ENCODE measurements at regions of chr17 and their contacts with region 1.

Region 1: DNA sequence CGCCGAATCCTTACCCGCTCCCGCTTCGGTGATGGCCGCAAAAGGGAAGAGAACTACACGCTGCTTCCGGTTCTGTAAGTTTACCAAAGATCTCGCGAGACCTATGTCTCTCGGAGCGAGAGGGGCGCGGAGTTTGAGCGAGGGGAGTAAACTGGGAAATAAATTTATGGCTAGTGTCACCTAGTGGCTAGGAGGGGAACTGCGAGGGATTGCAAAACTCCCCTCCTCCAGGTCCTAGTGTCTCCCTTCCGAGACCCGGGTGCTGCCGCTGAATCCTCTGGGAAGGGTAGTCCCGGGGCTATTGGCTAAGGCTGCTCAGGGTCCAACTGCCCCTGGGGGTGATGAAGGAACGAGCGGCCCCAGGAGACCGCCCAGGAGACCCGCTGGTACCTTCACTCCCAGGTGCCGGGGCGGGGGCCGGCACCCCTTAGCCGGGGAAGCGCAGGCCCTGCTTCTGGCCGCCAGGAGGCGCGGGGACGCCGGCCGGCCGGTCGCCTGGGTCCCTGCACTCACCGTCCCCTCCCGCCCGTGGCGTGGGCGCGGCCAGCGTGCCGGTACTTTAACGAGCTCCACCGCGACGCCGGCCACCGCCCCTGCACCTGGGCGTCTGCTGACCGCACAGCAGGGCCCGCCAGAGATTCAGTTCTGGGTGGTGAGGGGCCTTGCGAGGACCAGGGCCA is at the start of gene RPL26:
- DNase-seq: peak; percentile 96 to 97
- H3K4me3 ChIP-seq: peak within 1 kb of the TSS; percentile 91 to 100 (median 98)
- H3K27ac ChIP-seq: peak within 1 kb of the TSS; percentile 76
- H3K4me1 ChIP-seq: peaks cover 0 to 12% (median 4%) of the 10 kb centered on the region in 4 experiments; a peak in 5 of 7 replicates
- H3K27me3 ChIP-seq: no peaks in the 10 kb centered on the region
- CTCF ChIP-seq: peak; percentile 75 to 84 (median 83)
- EP300 ChIP-seq: no peak
- POLR2A ChIP-seq: peak; percentile 99
- RAD21 ChIP-seq: peak; percentile 16 to 35; a peak in 3 of 4 replicates
- total RNA-seq, gene RPL26: 1,963 and 1,980 TPM in 2 replicates

Region 2: GRCh38 chr17:8314797-8315763 is 68.2 kb before region 1 on chr17:
- CTCF ChIA-PET with region 1: interaction called, 3 read pairs
- POLR2A ChIA-PET with region 1: interaction called, 19 read pairs
- DNase-seq: no peak
- H3K4me3 ChIP-seq: peak overlapping the region; percentile 46 to 79 (median 66)
- H3K27ac ChIP-seq: no peak overlapping the region
- H3K4me1 ChIP-seq: peaks cover 0 to 16% (median 6%) of the 10 kb centered on the region in 4 experiments; a peak in 5 of 7 replicates
- H3K27me3 ChIP-seq: peaks cover 3 to 28% (median 23%) of the 10 kb centered on the region in 4 experiments
- CTCF ChIP-seq: no peak
- EP300 ChIP-seq: no peak
- POLR2A ChIP-seq: no peak
- RAD21 ChIP-seq: no peak

Region 3: DNA sequence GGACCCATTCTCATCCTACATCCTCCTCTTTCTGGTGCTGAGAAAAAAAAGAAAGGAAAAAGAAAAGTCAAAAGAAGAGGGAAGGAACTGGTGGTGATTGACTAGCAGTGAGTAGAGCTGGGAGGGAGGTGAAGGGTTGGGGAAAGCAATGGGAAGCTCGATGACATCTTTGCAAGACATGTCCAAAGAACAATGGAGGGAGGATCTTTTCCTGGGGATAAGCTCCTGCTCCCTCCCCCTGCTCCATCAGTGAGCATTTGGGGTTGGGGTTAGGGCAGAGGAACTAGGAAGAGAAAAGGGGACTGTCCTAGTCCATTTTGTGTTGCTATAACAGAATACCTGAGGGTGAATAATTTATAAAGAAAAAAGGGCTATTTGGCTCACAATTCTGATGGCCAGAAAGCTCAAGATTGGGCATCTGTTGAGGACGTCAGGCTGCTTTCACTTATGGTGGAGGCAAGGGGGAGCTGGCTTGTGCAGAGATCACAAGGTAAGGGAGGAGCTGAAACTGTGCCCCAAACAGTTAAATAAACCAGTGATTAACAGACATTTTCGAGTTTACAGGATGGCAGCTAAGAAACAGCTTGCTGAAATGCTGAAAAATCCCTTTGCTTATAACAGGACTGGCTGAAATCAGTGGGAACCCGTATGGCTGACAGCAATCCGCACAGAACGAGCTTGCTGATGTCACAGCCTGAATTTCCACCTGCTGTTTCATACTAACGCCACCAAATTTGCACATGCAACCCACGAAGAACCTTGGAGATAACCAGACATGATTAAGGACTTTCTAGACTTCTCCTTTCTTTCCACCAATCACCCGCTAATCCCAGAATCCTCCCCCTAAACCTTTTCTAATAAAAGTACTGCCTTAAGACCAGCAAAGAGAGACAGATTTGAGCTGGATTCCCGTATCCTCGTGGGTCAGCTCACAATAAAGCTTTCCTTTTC is 45.2 kb before region 1 on chr17:
- CTCF ChIA-PET with region 1: interaction called, 3 read pairs
- POLR2A ChIA-PET with region 1: interaction called, 66 read pairs
- DNase-seq: no peak
- H3K4me3 ChIP-seq: no peak overlapping the region
- H3K27ac ChIP-seq: no peak overlapping the region
- H3K4me1 ChIP-seq: peaks cover 2 to 10% (median 5%) of the 10 kb centered on the region in 4 experiments; a peak in 6 of 7 replicates
- H3K27me3 ChIP-seq: no peaks in the 10 kb centered on the region
- CTCF ChIP-seq: no peak
- EP300 ChIP-seq: no peak
- POLR2A ChIP-seq: no peak
- RAD21 ChIP-seq: no peak

Region 4: GRCh38 chr17:8359769-8360168 is 23.5 kb before region 1 on chr17:
- CTCF ChIA-PET with region 1: interaction called, 3 read pairs
- POLR2A ChIA-PET with region 1: interaction called, 36 read pairs
- DNase-seq: no peak
- H3K4me3 ChIP-seq: no peak overlapping the region
- H3K27ac ChIP-seq: no peak overlapping the region
- H3K4me1 ChIP-seq: peaks cover 0 to 5% (median 1%) of the 10 kb centered on the region in 4 experiments; a peak in 1 of 7 replicates
- H3K27me3 ChIP-seq: no peaks in the 10 kb centered on the region
- CTCF ChIP-seq: no peak
- EP300 ChIP-seq: no peak
- POLR2A ChIP-seq: no peak
- RAD21 ChIP-seq: no peak

Region 5: GRCh38 chr17:8393420-8394241 is 10.3 kb after region 1 on chr17:
- CTCF ChIA-PET with region 1: interaction called, 16 read pairs
- POLR2A ChIA-PET with region 1: interaction called, 51 read pairs
- DNase-seq: no peak
- H3K4me3 ChIP-seq: no peak overlapping the region
- H3K27ac ChIP-seq: no peak overlapping the region
- H3K4me1 ChIP-seq: peaks cover 4 to 12% (median 4%) of the 10 kb centered on the region in 4 experiments; a peak in 6 of 7 replicates
- H3K27me3 ChIP-seq: no peaks in the 10 kb centered on the region
- CTCF ChIP-seq: no peak
- EP300 ChIP-seq: no peak
- POLR2A ChIP-seq: no peak
- RAD21 ChIP-seq: no peak

Region 6: DNA sequence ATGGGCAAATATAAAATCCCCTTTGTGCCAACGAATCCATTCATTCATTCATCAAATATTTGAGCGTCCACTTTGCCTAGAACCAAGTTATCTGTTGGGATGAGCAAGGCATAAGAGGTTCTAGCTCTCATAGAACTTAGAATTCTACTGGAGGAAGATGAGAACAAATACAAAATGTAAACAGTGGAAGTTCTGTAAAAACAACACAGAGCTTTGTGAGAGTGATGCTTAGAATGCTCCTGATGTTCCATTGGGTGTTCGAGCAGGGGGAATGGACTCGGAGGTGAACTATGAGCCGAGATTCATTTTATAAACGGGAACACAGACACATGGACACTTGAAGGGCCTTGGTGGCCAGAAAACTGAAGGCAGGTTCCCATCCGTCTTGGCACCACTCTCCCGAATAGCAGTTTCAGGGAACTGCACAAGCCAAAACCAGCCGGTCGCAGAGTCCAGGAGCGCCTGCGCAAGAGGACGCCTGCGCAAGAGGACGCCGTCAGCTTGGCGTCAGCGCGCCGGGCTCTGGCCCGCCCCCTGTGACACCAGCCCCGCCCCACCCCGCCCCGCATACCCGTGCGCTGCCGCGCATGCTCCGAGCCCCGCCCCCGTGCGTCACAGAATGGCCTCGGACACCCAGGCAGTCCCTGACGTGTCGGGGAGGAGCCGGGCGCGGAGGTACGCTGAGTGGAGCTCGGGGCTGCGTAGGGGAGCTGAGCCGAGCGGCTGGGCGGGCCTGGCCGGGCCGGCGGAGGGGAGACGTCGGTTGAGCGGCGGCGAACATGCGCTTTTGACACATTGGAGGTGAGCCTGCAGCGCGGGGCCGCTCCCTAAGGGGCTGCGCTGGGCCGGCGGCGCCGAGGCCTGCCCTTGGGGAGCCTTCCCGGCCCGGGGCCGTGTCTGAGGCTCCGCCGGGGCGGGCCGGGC is 52.2 kb after region 1 on chr17 and contains the start of gene NDEL1:
- CTCF ChIA-PET with region 1: interaction called, 5 read pairs
- POLR2A ChIA-PET with region 1: interaction called, 10 read pairs
- DNase-seq: peak; percentile 91 to 98
- H3K4me3 ChIP-seq: peak within 1 kb of the TSS; percentile 84 to 95 (median 91)
- H3K27ac ChIP-seq: peak within 1 kb of the TSS; percentile 64
- H3K4me1 ChIP-seq: peaks cover 0 to 2% (median under 1%) of the 10 kb centered on the region in 4 experiments; a peak in 2 of 7 replicates
- H3K27me3 ChIP-seq: no peaks in the 10 kb centered on the region
- CTCF ChIP-seq: no peak
- EP300 ChIP-seq: no peak
- POLR2A ChIP-seq: peak; percentile 87
- RAD21 ChIP-seq: no peak
- total RNA-seq, gene NDEL1: 31.3 and 32.9 TPM in 2 replicates

Measured in H1 (cell line).